K562 (cell line): ENCODE measurements at regions of chr6 and their contacts with region 1.

Region 1: DNA sequence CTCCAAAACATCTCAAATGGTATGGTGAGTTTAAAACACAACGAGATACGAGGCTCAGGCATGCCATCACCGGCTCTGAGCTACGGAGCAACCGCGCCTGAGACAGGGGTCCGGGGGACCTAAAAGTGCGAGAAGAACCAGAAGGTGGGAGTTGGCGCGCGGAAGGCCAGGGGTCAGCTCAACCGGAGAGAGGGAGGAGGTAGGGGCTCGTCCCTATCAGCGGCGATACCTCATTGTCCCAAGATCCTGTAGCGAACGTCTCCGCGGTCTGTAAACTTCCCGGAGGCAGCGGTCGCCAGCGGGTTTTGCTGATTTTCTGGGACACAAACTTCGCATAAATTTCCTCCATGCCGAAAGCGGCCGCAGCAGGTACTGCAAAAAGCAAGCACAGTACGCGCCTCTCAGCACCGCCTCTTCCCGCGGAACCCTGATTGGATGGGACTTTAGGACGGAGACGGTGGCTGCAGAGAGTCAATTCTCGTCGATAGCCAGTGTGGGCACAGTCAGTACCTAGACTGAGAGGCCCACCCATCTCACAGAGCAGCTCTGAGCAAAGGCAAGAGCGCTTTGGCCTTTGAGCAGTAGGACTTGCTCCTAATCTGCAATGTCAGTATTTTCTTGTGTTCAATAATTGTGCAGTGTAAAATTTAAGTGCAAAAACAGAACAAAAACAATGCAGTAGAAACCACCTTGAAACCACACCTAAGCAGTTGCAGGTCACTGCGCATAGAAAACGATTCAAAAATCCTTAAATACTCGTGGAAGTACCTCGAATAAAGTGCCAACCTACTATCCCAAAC is at the start of gene NUP43:
- DNase-seq: peak; percentile 90 to 99 (median 92)
- ATAC-seq: peak; percentile 69
- H3K4me3 ChIP-seq: peak within 1 kb of the TSS; percentile 69
- H3K27ac ChIP-seq: peak within 1 kb of the TSS; percentile 78
- H3K4me1 ChIP-seq: peaks cover 10 to 19% of the 10 kb centered on the region in 2 experiments
- H3K27me3 ChIP-seq: no peaks in the 10 kb centered on the region
- CTCF ChIP-seq: peak; percentile 61 to 75 (median 71)
- EP300 ChIP-seq: peak; percentile 35; the same call in 1 of the 2 replicates
- POLR2A ChIP-seq: peak; percentile 88
- RAD21 ChIP-seq: peak in 1 of 2 experiments; percentile 18; a peak in 1 of 4 replicates
- polyA plus RNA-seq, gene NUP43: 28.9 to 39.7 TPM

Region 2: GRCh38 chr6:149389509-149390297 is 356.6 kb before region 1 on chr6:
- CTCF ChIA-PET with region 1: no interaction called
- POLR2A ChIA-PET with region 1: no interaction called
- in situ Hi-C with region 1: no loop called
- intact Hi-C with region 1: no loop called
- DNase-seq: no peak
- ATAC-seq: no peak
- H3K4me3 ChIP-seq: no peak overlapping the region
- H3K27ac ChIP-seq: no peak overlapping the region
- H3K4me1 ChIP-seq: no peaks in the 10 kb centered on the region
- H3K27me3 ChIP-seq: no peaks in the 10 kb centered on the region
- CTCF ChIP-seq: no peak
- EP300 ChIP-seq: no peak
- POLR2A ChIP-seq: no peak
- RAD21 ChIP-seq: no peak

Region 3: DNA sequence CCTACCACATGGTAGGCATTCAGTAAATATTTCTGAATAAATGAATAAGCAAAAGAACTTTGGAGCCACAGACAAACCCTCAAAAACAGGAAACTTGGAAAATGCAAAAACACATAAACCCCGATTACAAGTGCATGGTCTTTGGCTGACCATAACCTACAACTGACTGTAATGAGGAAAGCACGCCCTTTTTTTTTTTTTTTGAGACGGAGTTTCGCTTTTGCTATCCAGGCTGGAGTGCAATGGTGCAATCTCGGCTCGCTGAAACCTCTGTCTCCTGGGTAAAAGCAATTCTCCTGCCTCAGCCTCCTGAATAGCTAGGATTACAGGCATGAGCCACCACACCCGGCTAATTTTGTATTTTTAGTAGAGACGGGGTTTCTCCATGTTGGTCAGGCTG is 16.5 kb before region 1 on chr6:
- CTCF ChIA-PET with region 1: no interaction called
- POLR2A ChIA-PET with region 1: interaction called, 11 read pairs
- in situ Hi-C with region 1: no loop called
- intact Hi-C with region 1: loop called (anchors 1 kb)
- DNase-seq: no peak
- ATAC-seq: no peak
- H3K4me3 ChIP-seq: no peak overlapping the region
- H3K27ac ChIP-seq: peak overlapping the region; percentile 95
- H3K4me1 ChIP-seq: peaks cover 16 to 37% of the 10 kb centered on the region in 2 experiments
- H3K27me3 ChIP-seq: no peaks in the 10 kb centered on the region
- CTCF ChIP-seq: no peak
- EP300 ChIP-seq: no peak
- POLR2A ChIP-seq: no peak
- RAD21 ChIP-seq: no peak